ENCODE measurements at regions of chr11 and their contacts with region 1.

Region 1: GRCh38 chr11:111565114-111565720 is 24.7 kb downstream of the LAYN start:
- DNase-seq: peak; percentile 73 to 86
- H3K4me3 ChIP-seq: no peak overlapping the region
- H3K4me3 Mint-ChIP-seq: no peak overlapping the region
- H3K27ac Mint-ChIP-seq: no peak overlapping the region
- H3K4me1 ChIP-seq: no peaks in the 10 kb centered on the region
- H3K4me1 Mint-ChIP-seq: peaks cover 7% of the 10 kb centered on the region
- H3K27me3 ChIP-seq: no peaks in the 10 kb centered on the region
- H3K27me3 Mint-ChIP-seq: no peaks in the 10 kb centered on the region
- CTCF ChIP-seq: peak; percentile 93 to 98

Region 2: DNA sequence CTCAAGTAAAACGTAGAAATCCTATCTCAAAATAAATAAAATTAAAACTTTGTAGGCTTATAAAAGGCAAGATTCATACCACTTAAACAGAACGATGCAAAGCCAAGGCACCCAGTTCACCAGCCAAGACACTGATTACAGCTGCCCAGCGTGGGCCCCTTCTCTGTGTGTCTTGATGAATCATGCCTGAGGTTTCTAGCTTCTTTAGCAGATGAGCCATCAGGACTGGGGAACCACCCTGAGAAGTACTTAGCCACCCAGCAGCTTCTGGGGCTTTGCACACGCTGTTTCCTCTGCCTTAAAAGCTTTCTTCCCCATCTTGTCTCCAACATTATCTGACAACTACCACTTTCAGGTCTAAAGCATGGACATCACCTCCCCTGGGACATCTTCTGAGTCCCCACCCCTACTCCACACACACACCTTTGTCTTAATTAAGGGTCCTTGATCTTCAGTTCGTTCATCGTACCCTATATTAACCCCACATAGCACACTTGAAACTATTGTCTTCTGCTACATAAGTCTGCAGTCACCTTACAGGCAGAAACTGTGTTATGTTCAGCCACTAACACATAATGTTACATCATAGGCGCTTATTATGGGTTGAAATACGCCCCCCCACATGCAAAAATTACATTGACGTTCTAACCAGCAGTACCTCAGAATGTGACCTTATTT is 33.4 kb before region 1 on chr11:
- CTCF ChIA-PET with region 1: no interaction called
- POLR2A ChIA-PET with region 1: no interaction called
- intact Hi-C with region 1: loop called (anchors 2 kb)
- DNase-seq: peak; percentile 59 to 66
- H3K4me3 ChIP-seq: no peak overlapping the region
- H3K4me3 Mint-ChIP-seq: peak overlapping the region; percentile 7
- H3K27ac Mint-ChIP-seq: peak overlapping the region; percentile 43
- H3K4me1 ChIP-seq: peaks cover 45% of the 10 kb centered on the region
- H3K4me1 Mint-ChIP-seq: peaks cover 27% of the 10 kb centered on the region
- H3K27me3 ChIP-seq: no peaks in the 10 kb centered on the region
- H3K27me3 Mint-ChIP-seq: no peaks in the 10 kb centered on the region
- CTCF ChIP-seq: no peak

Region 3: GRCh38 chr11:111586388-111586831 is 21.2 kb after region 1 on chr11:
- CTCF ChIA-PET with region 1: no interaction called
- POLR2A ChIA-PET with region 1: no interaction called
- intact Hi-C with region 1: loop called (anchors 1 kb)
- DNase-seq: peak in 1 of 2 experiments; percentile 71
- H3K4me3 ChIP-seq: no peak overlapping the region
- H3K4me3 Mint-ChIP-seq: no peak overlapping the region
- H3K27ac Mint-ChIP-seq: no peak overlapping the region
- H3K4me1 ChIP-seq: no peaks in the 10 kb centered on the region
- H3K4me1 Mint-ChIP-seq: no peaks in the 10 kb centered on the region
- H3K27me3 ChIP-seq: no peaks in the 10 kb centered on the region
- H3K27me3 Mint-ChIP-seq: no peaks in the 10 kb centered on the region
- CTCF ChIP-seq: peak; percentile 83 to 91

Measured in Caco-2 (cell line).